Activated CD8-positive, alpha-beta T cell treated with anti-CD3 and anti-CD28 coated beads for 36 hours (primary cell): ENCODE measurements at regions of chr1 and their contacts with region 1.

Region 1: GRCh38 chr1:180178511-180179161 is 24.0 kb downstream of the QSOX1 start:
- DNase-seq: peak; percentile 75
- ATAC-seq: peak; percentile 91
- H3K4me3 Mint-ChIP-seq: no peak overlapping the region
- H3K27ac Mint-ChIP-seq: no peak overlapping the region
- H3K4me1 Mint-ChIP-seq: no peaks in the 10 kb centered on the region
- H3K27me3 Mint-ChIP-seq: no peaks in the 10 kb centered on the region
- CTCF ChIP-seq: peak; percentile 94

Region 2: DNA sequence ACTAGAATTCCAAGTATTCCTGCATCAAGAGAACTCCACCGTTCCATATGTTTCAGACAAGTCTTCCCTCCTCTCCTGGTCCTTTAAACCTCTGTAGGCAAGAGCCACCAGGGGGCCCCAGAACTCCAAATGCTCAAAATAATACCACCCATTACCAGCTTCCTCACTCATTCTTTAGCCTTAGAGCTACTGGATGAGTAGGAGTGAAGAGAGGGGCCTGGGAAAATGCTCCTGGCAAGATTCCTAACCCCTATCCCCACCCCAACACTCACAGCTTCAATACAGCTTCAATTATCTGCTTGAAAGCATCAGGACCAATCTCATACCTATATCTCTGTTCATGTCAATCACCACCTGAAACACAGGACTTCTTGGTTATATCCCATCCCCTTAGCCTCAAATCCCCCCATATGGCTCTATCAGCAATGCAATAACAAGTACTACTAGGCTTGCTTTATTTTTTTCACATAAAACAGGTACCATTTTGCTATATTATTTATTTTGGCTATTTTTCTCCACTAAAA is 310.8 kb before region 1 on chr1:
- CTCF ChIA-PET with region 1: interaction called, 33 read pairs
- POLR2A ChIA-PET with region 1: no interaction called
- intact Hi-C with region 1: loop called (anchors 5 kb)
- DNase-seq: peak; percentile 72
- ATAC-seq: peak; percentile 77
- H3K4me3 Mint-ChIP-seq: no peak overlapping the region
- H3K27ac Mint-ChIP-seq: no peak overlapping the region
- H3K4me1 Mint-ChIP-seq: peaks cover 14% of the 10 kb centered on the region
- H3K27me3 Mint-ChIP-seq: no peaks in the 10 kb centered on the region
- CTCF ChIP-seq: peak; percentile 75

Region 3: GRCh38 chr1:180131510-180131909 is 47.1 kb before region 1 on chr1:
- CTCF ChIA-PET with region 1: interaction called, 16 read pairs
- POLR2A ChIA-PET with region 1: no interaction called
- intact Hi-C with region 1: no loop called
- DNase-seq: peak; percentile 75
- ATAC-seq: peak; percentile 97
- H3K4me3 Mint-ChIP-seq: no peak overlapping the region
- H3K27ac Mint-ChIP-seq: peak overlapping the region; percentile 11
- H3K4me1 Mint-ChIP-seq: peaks cover 13% of the 10 kb centered on the region
- H3K27me3 Mint-ChIP-seq: peaks cover 16% of the 10 kb centered on the region
- CTCF ChIP-seq: no peak

Region 4: GRCh38 chr1:180163041-180163440 is 15.6 kb before region 1 on chr1:
- CTCF ChIA-PET with region 1: interaction called, 97 read pairs
- POLR2A ChIA-PET with region 1: interaction called, 3 read pairs
- intact Hi-C with region 1: no loop called
- DNase-seq: no peak
- ATAC-seq: no peak
- H3K4me3 Mint-ChIP-seq: no peak overlapping the region
- H3K27ac Mint-ChIP-seq: no peak overlapping the region
- H3K4me1 Mint-ChIP-seq: peaks cover 14% of the 10 kb centered on the region
- H3K27me3 Mint-ChIP-seq: no peaks in the 10 kb centered on the region
- CTCF ChIP-seq: no peak